Activated B cell treated with CpG ODN at 0.5 μM for 24 hours (primary cell): ENCODE measurements at regions of chrX and their contacts with region 1.

Region 1: GRCh38 chrX:19840899-19841648 is 46.3 kb downstream of the SH3KBP1 start:
- DNase-seq: no peak
- ATAC-seq: peak; percentile 65
- H3K4me3 Mint-ChIP-seq: peak overlapping the region; percentile 62
- H3K27ac Mint-ChIP-seq: peak overlapping the region; percentile 89
- H3K4me1 Mint-ChIP-seq: peaks cover 67% of the 10 kb centered on the region
- H3K27me3 Mint-ChIP-seq: no peaks in the 10 kb centered on the region
- CTCF ChIP-seq: no peak

Region 2: GRCh38 chrX:19739683-19740082 is 101.4 kb before region 1 on chrX:
- CTCF ChIA-PET with region 1: interaction called, 13 read pairs
- POLR2A ChIA-PET with region 1: interaction called, 4 read pairs
- intact Hi-C with region 1: loop called (anchors 2 kb)
- DNase-seq: no peak
- ATAC-seq: peak; percentile 57
- H3K4me3 Mint-ChIP-seq: no peak overlapping the region
- H3K27ac Mint-ChIP-seq: no peak overlapping the region
- H3K4me1 Mint-ChIP-seq: peaks cover 46% of the 10 kb centered on the region
- H3K27me3 Mint-ChIP-seq: no peaks in the 10 kb centered on the region
- CTCF ChIP-seq: no peak

Region 3: DNA sequence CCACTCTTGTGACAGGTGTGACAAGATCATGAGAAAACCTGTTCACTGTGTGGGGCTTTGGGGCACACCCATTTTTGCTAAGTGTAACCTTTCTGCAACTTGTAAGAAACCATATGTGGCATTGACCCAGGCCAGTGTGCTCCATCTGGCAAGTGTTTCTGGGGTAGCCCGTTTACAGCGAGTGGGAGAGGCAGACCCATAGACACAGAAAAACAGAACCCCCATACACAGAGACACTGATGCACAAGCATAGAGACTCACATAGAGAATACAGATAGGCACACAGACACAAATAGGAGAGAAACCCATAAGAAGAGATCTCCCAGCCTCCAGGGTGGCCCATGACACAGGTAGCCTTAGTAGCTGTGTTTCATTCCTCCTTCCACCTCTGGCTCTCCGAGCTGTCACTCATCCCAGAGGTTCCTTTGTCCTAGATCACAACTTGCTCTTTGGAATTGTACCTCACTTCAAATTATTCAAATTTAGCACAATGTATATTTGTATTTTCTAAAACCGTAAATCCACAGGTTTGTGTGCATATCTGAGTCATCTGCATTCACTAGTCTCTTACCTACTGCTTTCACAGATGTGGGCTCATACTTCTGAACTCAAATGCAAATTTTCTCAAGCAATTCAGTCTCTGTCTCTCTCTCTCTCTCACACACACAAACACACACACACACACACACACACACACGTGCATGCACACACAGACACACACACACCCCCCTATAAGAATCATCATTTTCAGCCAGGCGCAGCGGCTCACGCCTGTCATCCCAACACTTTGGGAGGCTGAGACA is 68.0 kb before region 1 on chrX:
- CTCF ChIA-PET with region 1: no interaction called
- POLR2A ChIA-PET with region 1: interaction called, 4 read pairs
- intact Hi-C with region 1: loop called (anchors 2 kb)
- DNase-seq: no peak
- ATAC-seq: peak; percentile 69
- H3K4me3 Mint-ChIP-seq: peak overlapping the region; percentile 57
- H3K27ac Mint-ChIP-seq: peak overlapping the region; percentile 89
- H3K4me1 Mint-ChIP-seq: peaks cover 74% of the 10 kb centered on the region
- H3K27me3 Mint-ChIP-seq: no peaks in the 10 kb centered on the region
- CTCF ChIP-seq: no peak

Region 4: GRCh38 chrX:19805046-19805690 is 35.9 kb before region 1 on chrX:
- CTCF ChIA-PET with region 1: no interaction called
- POLR2A ChIA-PET with region 1: interaction called, 3 read pairs
- intact Hi-C with region 1: loop called (anchors 5 kb)
- DNase-seq: no peak
- ATAC-seq: peak; percentile 56
- H3K4me3 Mint-ChIP-seq: no peak overlapping the region
- H3K27ac Mint-ChIP-seq: peak overlapping the region; percentile 59
- H3K4me1 Mint-ChIP-seq: peaks cover 47% of the 10 kb centered on the region
- H3K27me3 Mint-ChIP-seq: no peaks in the 10 kb centered on the region
- CTCF ChIP-seq: no peak

Region 5: GRCh38 chrX:19855700-19856381 is 14.8 kb after region 1 on chrX:
- CTCF ChIA-PET with region 1: interaction called, 3 read pairs
- POLR2A ChIA-PET with region 1: interaction called, 3 read pairs
- intact Hi-C with region 1: loop called (anchors 2 kb)
- DNase-seq: no peak
- ATAC-seq: no peak
- H3K4me3 Mint-ChIP-seq: peak overlapping the region; percentile 58
- H3K27ac Mint-ChIP-seq: peak overlapping the region; percentile 92
- H3K4me1 Mint-ChIP-seq: peaks cover 65% of the 10 kb centered on the region
- H3K27me3 Mint-ChIP-seq: no peaks in the 10 kb centered on the region
- CTCF ChIP-seq: no peak

Region 6: DNA sequence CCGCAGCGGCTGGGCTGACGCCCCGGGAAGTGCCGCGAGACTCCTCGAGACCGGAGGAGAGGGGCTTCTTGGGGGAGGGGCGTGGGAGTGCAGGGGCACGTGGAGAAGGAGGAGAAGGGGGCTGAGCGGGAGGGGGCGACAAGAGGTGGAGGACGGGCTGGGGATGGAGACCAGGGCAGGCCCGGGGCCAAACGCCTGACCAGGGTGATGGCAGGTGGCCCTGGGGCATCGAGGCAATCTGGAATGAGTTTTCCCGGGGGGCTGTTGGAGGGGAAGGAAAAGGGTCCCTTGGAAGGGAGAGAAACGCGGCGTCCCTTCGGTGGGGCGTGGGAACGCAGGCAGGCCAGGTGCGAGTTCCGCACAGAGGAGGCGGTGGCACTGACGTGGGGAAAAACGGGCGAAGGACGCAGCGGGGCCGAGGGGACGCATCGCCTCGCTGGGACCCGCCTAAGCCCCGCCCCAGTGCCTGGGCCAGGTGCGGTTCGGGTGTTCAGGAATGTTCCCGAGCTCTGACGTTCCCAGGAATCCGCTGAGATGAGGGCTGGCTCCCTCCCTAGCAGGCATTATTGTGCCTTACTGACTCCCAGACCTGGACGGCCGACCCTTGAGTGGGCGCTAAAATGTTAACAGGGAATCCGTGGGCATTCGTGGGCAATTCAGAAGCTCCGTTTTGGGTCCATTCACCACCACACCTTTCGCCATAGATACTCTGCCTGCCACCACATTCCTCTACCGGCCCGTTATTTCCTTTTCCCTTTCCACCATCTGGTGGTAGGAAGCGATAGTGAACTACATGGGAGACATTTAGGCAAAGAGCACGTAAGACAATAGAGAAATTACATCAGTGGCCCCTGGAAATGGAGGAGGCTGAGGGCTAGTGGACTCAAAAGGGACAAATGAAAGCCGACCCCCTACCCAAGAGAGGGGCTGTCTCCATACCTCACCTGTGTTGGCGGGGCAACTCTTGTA is 47.1 kb after region 1 on chrX:
- CTCF ChIA-PET with region 1: no interaction called
- POLR2A ChIA-PET with region 1: interaction called, 5 read pairs
- intact Hi-C with region 1: loop called (anchors 2 kb)
- DNase-seq: peak; percentile 44
- ATAC-seq: peak; percentile 33
- H3K4me3 Mint-ChIP-seq: peak overlapping the region; percentile 83
- H3K27ac Mint-ChIP-seq: peak overlapping the region; percentile 76
- H3K4me1 Mint-ChIP-seq: peaks cover 36% of the 10 kb centered on the region
- H3K27me3 Mint-ChIP-seq: no peaks in the 10 kb centered on the region
- CTCF ChIP-seq: no peak